CD8-positive, alpha-beta T cell (primary cell): ENCODE measurements at regions of chr1 and their contacts with region 1.

Region 1: DNA sequence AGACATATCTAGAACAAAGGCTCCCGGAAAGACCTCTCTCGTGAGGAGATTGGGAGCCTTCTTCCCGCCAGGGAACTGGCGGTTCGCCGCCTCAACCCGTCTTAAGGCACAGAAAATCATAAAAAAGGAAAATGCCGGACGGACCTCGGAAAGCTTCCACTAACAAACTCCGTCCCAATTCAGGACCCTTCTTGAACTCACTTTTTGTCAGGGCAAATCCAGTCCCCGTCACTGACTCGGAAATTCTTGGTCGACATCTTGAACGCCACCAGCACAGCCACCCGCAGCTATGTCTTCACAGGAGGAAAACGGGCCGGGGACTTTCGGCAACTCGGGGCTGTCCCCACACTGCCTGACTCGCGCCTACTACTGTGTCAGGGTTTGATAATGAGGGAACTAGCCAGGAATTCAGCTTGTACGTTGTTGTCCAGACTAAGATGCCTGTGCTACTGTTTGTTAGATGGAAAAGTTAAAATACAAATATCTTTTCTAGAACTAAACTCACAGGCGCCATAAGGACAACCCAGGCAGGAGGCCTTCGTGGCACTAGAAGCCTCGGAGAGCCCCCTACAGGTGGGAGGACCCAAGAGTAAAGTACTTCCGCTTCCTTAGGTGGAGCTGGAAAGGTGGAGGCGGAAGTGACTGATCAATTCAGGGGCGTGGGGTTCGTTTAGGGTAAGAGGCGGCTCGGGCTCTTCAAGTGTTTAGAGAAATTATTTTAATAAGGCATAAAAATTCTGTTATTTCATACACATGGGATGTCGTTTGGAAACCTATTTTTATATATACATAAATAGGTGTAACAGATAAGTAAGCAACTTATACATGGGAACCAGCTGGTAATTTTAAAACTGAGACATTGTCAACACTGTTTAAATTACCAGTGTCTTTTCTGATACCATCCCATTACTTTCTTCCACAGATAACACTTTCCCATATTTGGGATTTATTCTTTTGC is at the start of gene ZRANB2:
- DNase-seq: peak; percentile 80 to 97 (median 89)
- ATAC-seq: peak; percentile 97
- H3K4me3 ChIP-seq: peak within 1 kb of the TSS; percentile 88 to 96
- H3K4me3 Mint-ChIP-seq: peak within 1 kb of the TSS; percentile 96
- H3K27ac ChIP-seq: peak within 1 kb of the TSS; percentile 93 to 94
- H3K27ac Mint-ChIP-seq: peak within 1 kb of the TSS; percentile 98
- H3K4me1 ChIP-seq: peaks cover 24% of the 10 kb centered on the region
- H3K4me1 Mint-ChIP-seq: peaks cover 36% of the 10 kb centered on the region
- H3K27me3 ChIP-seq: no peaks in the 10 kb centered on the region
- H3K27me3 Mint-ChIP-seq: peaks cover 14% of the 10 kb centered on the region
- CTCF ChIP-seq: peak; percentile 33
- total RNA-seq, gene ZRANB2: 100 to 102 TPM

Region 2: GRCh38 chr1:70205434-70206118 is 875.4 kb before region 1 on chr1 and contains the start of gene LRRC40:
- CTCF ChIA-PET with region 1: no interaction called
- POLR2A ChIA-PET with region 1: interaction called, 18 read pairs
- intact Hi-C with region 1: loop called (anchors 1 kb)
- DNase-seq: peak; percentile 91 to 98 (median 96)
- ATAC-seq: peak; percentile 95
- H3K4me3 ChIP-seq: peak within 1 kb of the TSS; percentile 75 to 83
- H3K4me3 Mint-ChIP-seq: peak within 1 kb of the TSS; percentile 92
- H3K27ac ChIP-seq: peak within 1 kb of the TSS; percentile 88 to 97
- H3K27ac Mint-ChIP-seq: peak within 1 kb of the TSS; percentile 99
- H3K4me1 ChIP-seq: peaks cover 48% of the 10 kb centered on the region
- H3K4me1 Mint-ChIP-seq: peaks cover 76% of the 10 kb centered on the region
- H3K27me3 ChIP-seq: no peaks in the 10 kb centered on the region
- H3K27me3 Mint-ChIP-seq: no peaks in the 10 kb centered on the region
- CTCF ChIP-seq: no peak
- total RNA-seq, gene LRRC40: 13.7 to 15.4 TPM

Region 3: GRCh38 chr1:70221241-70222121 is 859.5 kb before region 1 on chr1 and contains the start of gene SRSF11:
- CTCF ChIA-PET with region 1: no interaction called
- POLR2A ChIA-PET with region 1: interaction called, 9 read pairs
- intact Hi-C with region 1: loop called (anchors 1 to 5 kb)
- DNase-seq: peak; percentile 95 to 98 (median 98)
- ATAC-seq: peak; percentile 94
- H3K4me3 ChIP-seq: peak within 1 kb of the TSS; percentile 82 to 91
- H3K4me3 Mint-ChIP-seq: peak within 1 kb of the TSS; percentile 94
- H3K27ac ChIP-seq: peak within 1 kb of the TSS; percentile 96 to 97
- H3K27ac Mint-ChIP-seq: peak within 1 kb of the TSS; percentile 99
- H3K4me1 ChIP-seq: peaks cover 43% of the 10 kb centered on the region
- H3K4me1 Mint-ChIP-seq: peaks cover 48% of the 10 kb centered on the region
- H3K27me3 ChIP-seq: no peaks in the 10 kb centered on the region
- H3K27me3 Mint-ChIP-seq: no peaks in the 10 kb centered on the region
- CTCF ChIP-seq: no peak
- total RNA-seq, gene SRSF11: 427 to 456 TPM

Region 4: GRCh38 chr1:70354332-70355110 is 726.5 kb before region 1 on chr1 and contains the start of gene ANKRD13C:
- CTCF ChIA-PET with region 1: no interaction called
- POLR2A ChIA-PET with region 1: interaction called, 8 read pairs
- intact Hi-C with region 1: loop called (anchors 1 to 5 kb)
- DNase-seq: peak; percentile 77 to 97 (median 88)
- ATAC-seq: peak; percentile 89
- H3K4me3 ChIP-seq: peak within 1 kb of the TSS; percentile 79
- H3K4me3 Mint-ChIP-seq: peak within 1 kb of the TSS; percentile 93
- H3K27ac ChIP-seq: peak within 1 kb of the TSS; percentile 90 to 92
- H3K27ac Mint-ChIP-seq: peak within 1 kb of the TSS; percentile 98
- H3K4me1 ChIP-seq: peaks cover 35% of the 10 kb centered on the region
- H3K4me1 Mint-ChIP-seq: peaks cover 51% of the 10 kb centered on the region
- H3K27me3 ChIP-seq: no peaks in the 10 kb centered on the region
- H3K27me3 Mint-ChIP-seq: no peaks in the 10 kb centered on the region
- CTCF ChIP-seq: no peak
- total RNA-seq, gene ANKRD13C: 40.0 to 40.9 TPM

Region 5: GRCh38 chr1:70410604-70411359 is 670.2 kb before region 1 on chr1 and contains the start of gene CTH:
- CTCF ChIA-PET with region 1: no interaction called
- POLR2A ChIA-PET with region 1: interaction called, 12 read pairs
- intact Hi-C with region 1: loop called (anchors 1 to 10 kb)
- DNase-seq: peak; percentile 82 to 97 (median 91)
- ATAC-seq: peak; percentile 90
- H3K4me3 ChIP-seq: peak within 1 kb of the TSS; percentile 69 to 70
- H3K4me3 Mint-ChIP-seq: peak within 1 kb of the TSS; percentile 92
- H3K27ac ChIP-seq: peak within 1 kb of the TSS; percentile 87 to 88
- H3K27ac Mint-ChIP-seq: peak within 1 kb of the TSS; percentile 95
- H3K4me1 ChIP-seq: peaks cover 14% of the 10 kb centered on the region
- H3K4me1 Mint-ChIP-seq: peaks cover 30% of the 10 kb centered on the region
- H3K27me3 ChIP-seq: no peaks in the 10 kb centered on the region
- H3K27me3 Mint-ChIP-seq: peaks cover 5% of the 10 kb centered on the region
- CTCF ChIP-seq: no peak
- total RNA-seq, gene CTH: 15.5 to 19.1 TPM

Region 6: DNA sequence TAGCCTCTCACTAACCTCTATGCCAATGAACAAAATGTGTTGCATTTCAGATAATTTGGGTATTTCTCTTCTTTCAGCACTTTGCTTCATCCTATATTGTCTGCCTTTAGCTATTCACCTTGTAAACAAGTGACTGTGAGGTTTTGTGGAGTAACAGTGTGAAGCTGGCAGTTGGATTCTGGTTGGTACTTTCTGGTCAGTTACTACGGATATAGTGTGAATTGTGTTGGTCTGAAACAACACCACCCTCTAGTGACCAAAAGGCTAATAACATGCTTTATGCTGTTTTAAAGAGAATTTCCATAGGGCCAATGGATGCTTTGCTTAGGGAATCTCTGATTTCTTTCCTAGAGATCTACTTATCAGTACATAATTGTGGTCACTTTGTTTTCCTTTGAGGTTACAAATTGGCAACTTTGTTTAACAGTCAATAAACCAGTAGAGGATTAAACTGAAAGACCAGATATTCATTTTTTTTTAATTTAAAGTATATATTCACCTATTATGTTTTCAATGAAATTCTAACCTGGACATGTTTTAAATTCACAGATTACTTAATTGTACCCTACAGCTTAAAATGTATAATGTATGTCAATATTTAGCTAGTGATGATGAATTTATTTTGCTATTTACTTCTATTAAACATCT is 30.9 kb before region 1 on chr1:
- CTCF ChIA-PET with region 1: interaction called, 4 read pairs
- POLR2A ChIA-PET with region 1: interaction called, 4 read pairs
- intact Hi-C with region 1: loop called in 1 of 2 experiments (anchors 2 kb)
- DNase-seq: peak in 3 of 9 experiments; percentile 14 to 72 (median 63)
- ATAC-seq: peak; percentile 57
- H3K4me3 ChIP-seq: no peak overlapping the region
- H3K4me3 Mint-ChIP-seq: no peak overlapping the region
- H3K27ac ChIP-seq: no peak overlapping the region
- H3K27ac Mint-ChIP-seq: no peak overlapping the region
- H3K4me1 ChIP-seq: peaks cover 14% of the 10 kb centered on the region
- H3K4me1 Mint-ChIP-seq: peaks cover 22% of the 10 kb centered on the region
- H3K27me3 ChIP-seq: peaks cover 14 to 17% of the 10 kb centered on the region in 2 experiments
- H3K27me3 Mint-ChIP-seq: peaks cover 32% of the 10 kb centered on the region
- CTCF ChIP-seq: peak; percentile 70

Region 7: GRCh38 chr1:71068325-71069240 is 12.4 kb before region 1 on chr1:
- CTCF ChIA-PET with region 1: interaction called, 4 read pairs
- POLR2A ChIA-PET with region 1: interaction called, 5 read pairs
- intact Hi-C with region 1: loop called in 1 of 2 experiments (anchors 2 kb)
- DNase-seq: no peak
- ATAC-seq: no peak
- H3K4me3 ChIP-seq: no peak overlapping the region
- H3K4me3 Mint-ChIP-seq: no peak overlapping the region
- H3K27ac ChIP-seq: no peak overlapping the region
- H3K27ac Mint-ChIP-seq: no peak overlapping the region
- H3K4me1 ChIP-seq: no peaks in the 10 kb centered on the region
- H3K4me1 Mint-ChIP-seq: peaks cover 18% of the 10 kb centered on the region
- H3K27me3 ChIP-seq: no peaks in the 10 kb centered on the region
- H3K27me3 Mint-ChIP-seq: no peaks in the 10 kb centered on the region
- CTCF ChIP-seq: no peak